SK-N-SH (cell line): ENCODE measurements at regions of chr11 and their contacts with region 1.

Region 1: DNA sequence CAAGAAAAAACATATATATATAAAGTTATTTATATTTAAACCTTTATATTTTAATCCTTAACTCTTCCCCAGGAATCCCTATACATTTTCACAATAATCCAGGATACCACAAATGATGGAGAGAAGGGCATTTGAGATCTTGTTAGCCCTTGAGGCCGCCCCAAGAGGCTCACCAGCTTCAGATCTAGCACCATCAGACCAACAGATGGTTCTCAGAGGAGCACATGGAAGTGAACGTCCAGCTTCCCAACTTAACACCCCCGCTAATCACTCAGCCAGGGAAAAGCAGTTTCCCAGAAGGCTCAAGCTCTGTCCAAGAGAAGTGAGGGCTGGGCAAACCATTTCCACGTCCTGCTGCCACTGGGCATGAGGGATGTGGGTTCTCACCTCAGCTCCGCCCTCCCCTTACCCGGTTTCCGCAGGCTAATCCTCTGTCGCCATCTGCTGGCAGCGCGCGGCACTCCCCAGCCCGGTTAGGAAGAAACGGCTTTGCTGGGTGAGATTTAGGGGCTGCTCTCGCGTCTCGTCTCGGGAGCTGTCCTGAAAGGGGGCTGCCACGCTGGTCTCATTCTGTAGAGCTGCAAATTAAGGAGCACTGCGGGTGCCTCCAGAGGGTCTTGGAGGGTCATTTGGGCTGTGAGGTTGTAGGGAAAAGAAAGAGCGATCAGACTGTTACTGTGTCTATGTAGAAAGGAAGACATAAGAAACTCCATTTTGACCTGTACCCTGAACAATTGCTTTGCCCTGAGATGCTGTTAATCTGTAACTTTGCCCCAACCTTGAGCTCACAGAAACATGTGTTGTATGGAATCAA is 6.8 kb upstream of the FAM111A start:
- DNase-seq: peak; percentile 86
- H3K4me3 ChIP-seq: peak overlapping the region; percentile 12 to 35; a peak in 2 of 4 replicates
- H3K27ac ChIP-seq: no peak overlapping the region
- H3K4me1 ChIP-seq: peaks cover 0 to 3% of the 10 kb centered on the region in 2 experiments; a peak in 1 of 4 replicates
- H3K27me3 ChIP-seq: no peaks in the 10 kb centered on the region
- CTCF ChIP-seq: peak; percentile 98
- EP300 ChIP-seq: no peak
- RAD21 ChIP-seq: peak; percentile 94

Region 2: GRCh38 chr11:58654079-58654907 is 481.6 kb before region 1 on chr11:
- CTCF ChIA-PET with region 1: interaction called, 10 read pairs
- POLR2A ChIA-PET with region 1: no interaction called
- DNase-seq: peak; percentile 64
- H3K4me3 ChIP-seq: peak overlapping the region in 1 of 2 experiments; percentile 27; a peak in 1 of 4 replicates
- H3K27ac ChIP-seq: no peak overlapping the region
- H3K4me1 ChIP-seq: no peaks in the 10 kb centered on the region
- H3K27me3 ChIP-seq: no peaks in the 10 kb centered on the region
- CTCF ChIP-seq: peak; percentile 96
- EP300 ChIP-seq: no peak
- RAD21 ChIP-seq: peak; percentile 77

Region 3: DNA sequence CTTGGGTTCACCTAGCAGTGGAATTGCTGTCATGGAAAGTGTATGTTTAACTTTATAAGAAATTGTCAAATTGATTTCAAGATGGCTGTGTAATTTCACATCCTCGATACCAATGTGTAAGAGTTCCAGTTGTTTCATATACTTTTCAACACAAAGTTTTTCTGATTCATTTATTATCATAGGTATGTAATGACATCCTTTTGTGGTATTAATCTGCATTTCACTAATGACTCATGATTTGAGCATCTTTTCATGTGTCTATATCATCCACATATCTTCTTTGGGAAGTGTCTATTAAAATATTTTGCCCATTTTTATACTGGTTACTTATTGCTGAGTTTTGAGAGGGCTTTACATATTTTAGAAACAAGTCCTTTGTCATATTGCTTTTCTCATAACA is 66.8 kb before region 1 on chr11:
- CTCF ChIA-PET with region 1: interaction called, 16 read pairs
- POLR2A ChIA-PET with region 1: no interaction called
- DNase-seq: no peak
- H3K4me3 ChIP-seq: no peak overlapping the region
- H3K27ac ChIP-seq: no peak overlapping the region
- H3K4me1 ChIP-seq: no peaks in the 10 kb centered on the region
- H3K27me3 ChIP-seq: peaks cover 20% of the 10 kb centered on the region; the same call in 1 of the 2 replicates
- CTCF ChIP-seq: no peak
- EP300 ChIP-seq: no peak
- RAD21 ChIP-seq: no peak

Region 4: GRCh38 chr11:59088162-59088561 is 47.7 kb before region 1 on chr11:
- CTCF ChIA-PET with region 1: interaction called, 11 read pairs
- POLR2A ChIA-PET with region 1: no interaction called
- DNase-seq: no peak
- H3K4me3 ChIP-seq: no peak overlapping the region
- H3K27ac ChIP-seq: no peak overlapping the region
- H3K4me1 ChIP-seq: no peaks in the 10 kb centered on the region
- H3K27me3 ChIP-seq: peaks cover 7% of the 10 kb centered on the region
- CTCF ChIP-seq: no peak
- EP300 ChIP-seq: no peak
- RAD21 ChIP-seq: no peak

Region 5: GRCh38 chr11:59106363-59107336 is 29.2 kb before region 1 on chr11 and contains the start of gene FAM111B:
- CTCF ChIA-PET with region 1: interaction called, 27 read pairs
- POLR2A ChIA-PET with region 1: no interaction called
- DNase-seq: peak; percentile 86
- H3K4me3 ChIP-seq: peak within 1 kb of the TSS; percentile 58 to 66
- H3K27ac ChIP-seq: peak within 1 kb of the TSS in 1 of 2 experiments; percentile 50; a peak in 1 of 4 replicates
- H3K4me1 ChIP-seq: peaks cover 0 to 10% of the 10 kb centered on the region in 2 experiments; a peak in 2 of 4 replicates
- H3K27me3 ChIP-seq: no peaks in the 10 kb centered on the region
- CTCF ChIP-seq: no peak
- EP300 ChIP-seq: no peak
- RAD21 ChIP-seq: no peak
- polyA plus RNA-seq, gene FAM111B: 0.94 and 1.0 TPM in 2 replicates

Region 6: GRCh38 chr11:59152312-59152951 is 16.6 kb after region 1 on chr11:
- CTCF ChIA-PET with region 1: interaction called, 46 read pairs
- POLR2A ChIA-PET with region 1: no interaction called
- DNase-seq: no peak
- H3K4me3 ChIP-seq: no peak overlapping the region
- H3K27ac ChIP-seq: no peak overlapping the region
- H3K4me1 ChIP-seq: no peaks in the 10 kb centered on the region
- H3K27me3 ChIP-seq: no peaks in the 10 kb centered on the region
- CTCF ChIP-seq: no peak
- EP300 ChIP-seq: no peak
- RAD21 ChIP-seq: no peak

Region 7: GRCh38 chr11:59164028-59164427 is 28.2 kb after region 1 on chr11:
- CTCF ChIA-PET with region 1: interaction called, 46 read pairs
- POLR2A ChIA-PET with region 1: no interaction called
- DNase-seq: no peak
- H3K4me3 ChIP-seq: no peak overlapping the region
- H3K27ac ChIP-seq: no peak overlapping the region
- H3K4me1 ChIP-seq: no peaks in the 10 kb centered on the region
- H3K27me3 ChIP-seq: peaks cover 20% of the 10 kb centered on the region; the same call in 1 of the 2 replicates
- CTCF ChIP-seq: no peak
- EP300 ChIP-seq: no peak
- RAD21 ChIP-seq: no peak